Natural killer cell (primary cell): ENCODE measurements at regions of chr12 and their contacts with region 1.

Region 1: GRCh38 chr12:19439059-19440018 is at the start of gene AEBP2:
- DNase-seq: peak; percentile 84 to 98
- ATAC-seq: peak; percentile 88 to 96 (median 89)
- H3K4me3 ChIP-seq: peak within 1 kb of the TSS; percentile 95
- H3K4me3 Mint-ChIP-seq: peak within 1 kb of the TSS; percentile 96
- H3K27ac ChIP-seq: peak within 1 kb of the TSS; percentile 94
- H3K27ac Mint-ChIP-seq: peak within 1 kb of the TSS; percentile 94 to 95
- H3K4me1 ChIP-seq: peaks cover 19% of the 10 kb centered on the region
- H3K4me1 Mint-ChIP-seq: peaks cover 45 to 58% of the 10 kb centered on the region in 2 donors
- H3K27me3 ChIP-seq: no peaks in the 10 kb centered on the region
- H3K27me3 Mint-ChIP-seq: no peaks in the 10 kb centered on the region
- CTCF ChIP-seq: no peak
- total RNA-seq, gene AEBP2: 57.1 to 79.5 (median 61.8) TPM

Region 2: GRCh38 chr12:19382111-19382526 is 57.2 kb before region 1 on chr12:
- intact Hi-C with region 1: no loop called
- DNase-seq: peak in 1 of 2 donors; percentile 26
- ATAC-seq: peak in 2 of 3 donors; percentile 37 to 68
- H3K4me3 ChIP-seq: no peak overlapping the region
- H3K4me3 Mint-ChIP-seq: no peak overlapping the region
- H3K27ac ChIP-seq: no peak overlapping the region
- H3K27ac Mint-ChIP-seq: no peak overlapping the region
- H3K4me1 ChIP-seq: no peaks in the 10 kb centered on the region
- H3K4me1 Mint-ChIP-seq: no peaks in the 10 kb centered on the region
- H3K27me3 ChIP-seq: no peaks in the 10 kb centered on the region
- H3K27me3 Mint-ChIP-seq: no peaks in the 10 kb centered on the region
- CTCF ChIP-seq: no peak

Region 3: DNA sequence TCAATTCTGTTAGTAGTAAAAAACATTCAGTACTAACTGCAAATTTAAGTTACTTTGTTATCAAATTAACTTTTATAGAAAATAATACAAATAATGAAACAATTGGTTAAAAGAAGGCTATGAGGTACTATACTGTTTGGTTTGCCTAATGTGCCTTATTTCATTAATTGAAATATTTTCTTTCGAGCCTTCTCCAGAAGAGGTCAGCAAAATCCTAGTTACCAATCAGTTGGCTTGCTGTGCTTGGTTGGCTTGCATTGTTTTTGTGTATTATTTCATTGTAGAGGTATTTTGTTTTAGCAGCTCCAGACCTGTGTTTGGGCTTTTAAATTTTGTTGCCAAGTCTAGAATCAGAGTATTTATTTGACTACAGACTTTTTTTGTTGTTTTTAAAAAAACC is 68.5 kb after region 1 on chr12:
- intact Hi-C with region 1: loop called (anchors 10 kb)
- DNase-seq: no peak
- ATAC-seq: no peak
- H3K4me3 ChIP-seq: no peak overlapping the region
- H3K4me3 Mint-ChIP-seq: no peak overlapping the region
- H3K27ac ChIP-seq: no peak overlapping the region
- H3K27ac Mint-ChIP-seq: peak overlapping the region; percentile 20 to 70
- H3K4me1 ChIP-seq: peaks cover 3% of the 10 kb centered on the region
- H3K4me1 Mint-ChIP-seq: peaks cover 54 to 64% of the 10 kb centered on the region in 2 donors
- H3K27me3 ChIP-seq: no peaks in the 10 kb centered on the region
- H3K27me3 Mint-ChIP-seq: no peaks in the 10 kb centered on the region
- CTCF ChIP-seq: no peak